AG04450 (cell line): ENCODE measurements at regions of chr7 and their contacts with region 1.

Region 1: DNA sequence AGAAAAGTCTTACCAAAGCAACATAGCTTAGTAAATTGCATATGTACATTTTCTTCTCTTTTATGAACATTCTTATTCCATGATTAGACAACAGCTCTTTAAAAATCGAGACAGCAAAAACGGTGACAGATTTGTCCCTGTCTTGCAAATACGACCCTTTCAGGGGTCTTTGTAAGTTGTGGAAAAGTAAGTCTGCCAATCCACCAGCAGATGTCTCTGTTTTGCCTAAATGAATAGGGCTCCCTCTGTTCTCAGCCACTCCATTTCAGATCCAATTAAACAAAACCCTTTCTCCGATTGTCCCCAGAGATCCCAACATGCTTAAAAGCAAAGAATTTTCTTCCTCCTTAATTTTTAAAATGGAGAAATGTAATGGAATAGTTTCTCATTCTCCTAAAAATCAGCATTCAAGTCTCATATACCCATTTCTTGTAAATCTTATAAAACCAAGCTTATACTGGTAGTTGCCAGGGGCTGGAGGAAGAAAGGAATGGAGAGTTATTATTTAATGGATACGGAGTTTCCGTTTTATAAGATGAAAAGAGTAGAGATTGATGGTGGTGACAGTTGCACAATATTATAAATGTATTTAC is 61.0 kb upstream of the NFE2L3 start:
- DNase-seq: peak; percentile 26
- H3K4me3 ChIP-seq: no peak overlapping the region
- H3K27ac ChIP-seq: no peak overlapping the region
- H3K27me3 ChIP-seq: peaks cover 5% of the 10 kb centered on the region
- CTCF ChIP-seq: peak; percentile 87

Region 2: DNA sequence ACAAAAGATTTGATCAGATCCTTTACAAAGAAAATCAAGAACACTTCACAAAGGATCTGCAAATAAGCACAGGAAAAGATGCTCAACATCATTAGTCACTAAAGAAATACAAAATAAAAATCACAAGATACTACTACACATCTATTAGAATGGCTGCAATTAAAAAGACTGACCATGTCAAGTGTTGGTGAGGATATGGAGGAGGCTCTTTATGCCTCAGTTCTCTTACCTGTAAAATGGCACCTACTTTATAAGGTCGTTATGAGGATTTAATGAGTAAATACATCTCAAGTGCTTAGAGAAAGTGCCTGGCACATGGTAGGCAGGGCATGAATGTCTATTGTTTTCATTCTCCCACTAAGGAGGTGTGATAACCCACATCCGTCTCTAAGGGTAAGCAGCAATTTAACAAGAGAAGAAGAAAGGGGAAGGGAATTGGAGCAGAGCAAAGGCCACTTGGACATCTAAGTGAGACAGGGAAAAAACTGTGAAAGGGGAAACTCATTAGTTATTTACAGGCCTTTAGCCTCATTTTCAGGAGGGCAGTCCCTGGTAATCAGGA is 96.5 kb before region 1 on chr7:
- CTCF ChIA-PET with region 1: no interaction called
- POLR2A ChIA-PET with region 1: no interaction called
- DNase-seq: no peak
- H3K4me3 ChIP-seq: no peak overlapping the region
- H3K27ac ChIP-seq: no peak overlapping the region
- H3K27me3 ChIP-seq: peaks cover 2% of the 10 kb centered on the region
- CTCF ChIP-seq: no peak

Region 3: DNA sequence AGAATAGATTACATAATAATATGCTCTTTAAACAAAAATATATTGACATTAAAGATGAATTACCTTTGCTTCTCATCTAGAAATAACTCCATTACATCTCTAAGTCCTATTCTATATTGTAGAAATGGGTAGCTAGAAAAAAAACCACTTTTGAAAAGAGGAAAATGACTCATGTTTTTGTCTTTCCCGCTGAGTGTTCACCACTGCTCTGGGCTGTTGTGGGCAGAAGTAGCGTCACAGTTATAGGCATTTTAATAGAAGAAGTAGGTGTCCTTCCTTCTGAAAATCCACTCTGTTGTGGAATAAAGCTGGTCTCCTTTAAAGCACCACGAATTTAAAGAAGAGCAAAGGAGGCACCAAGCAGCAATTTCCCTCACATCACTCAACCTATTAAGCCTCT is 56.6 kb before region 1 on chr7:
- CTCF ChIA-PET with region 1: no interaction called
- POLR2A ChIA-PET with region 1: no interaction called
- DNase-seq: no peak
- H3K4me3 ChIP-seq: no peak overlapping the region
- H3K27ac ChIP-seq: no peak overlapping the region
- H3K27me3 ChIP-seq: no peaks in the 10 kb centered on the region
- CTCF ChIP-seq: no peak

Region 4: DNA sequence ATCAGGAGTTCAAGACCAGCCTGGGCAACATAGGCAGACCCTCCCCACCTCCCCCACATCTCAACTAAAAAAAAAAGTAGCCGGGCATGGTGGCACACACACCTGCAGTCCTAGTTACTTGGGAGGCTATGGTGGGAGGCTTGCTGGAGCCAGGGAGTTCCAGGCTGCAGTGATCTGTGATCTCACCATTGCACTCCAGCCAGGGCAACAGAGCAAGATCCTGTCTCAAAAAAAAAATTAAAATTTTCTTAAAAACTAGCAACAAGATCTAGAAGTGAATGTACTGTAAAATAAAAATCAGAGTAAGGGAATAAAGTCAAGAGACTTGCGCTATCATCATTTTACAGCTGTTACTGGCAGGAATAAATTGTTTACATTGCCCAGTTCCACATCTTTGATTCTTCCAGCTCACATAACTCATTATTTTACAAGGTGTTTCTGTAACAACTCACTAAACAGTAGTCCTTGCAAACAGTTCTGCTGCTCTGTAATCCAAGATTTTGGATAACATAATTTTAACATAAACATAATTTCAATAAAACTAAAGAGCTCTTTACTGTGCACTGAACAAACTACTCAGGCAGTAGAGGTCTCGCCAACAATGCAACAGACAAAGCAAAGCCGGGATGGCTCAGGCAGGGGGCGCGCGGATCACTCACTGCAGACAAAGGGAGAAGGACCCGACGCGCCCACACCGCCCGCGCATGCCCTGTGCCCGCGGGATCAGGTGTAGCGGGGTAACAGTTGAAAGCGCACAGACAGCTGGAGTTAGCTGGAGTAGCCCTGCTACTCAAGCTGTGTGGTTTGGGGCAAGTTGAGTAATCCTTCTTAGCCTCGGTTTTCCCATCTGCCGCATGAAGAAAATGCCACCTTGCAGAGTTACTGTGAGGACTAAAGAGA is 12.3 kb before region 1 on chr7:
- CTCF ChIA-PET with region 1: interaction called, 18 read pairs
- POLR2A ChIA-PET with region 1: no interaction called
- DNase-seq: no peak
- H3K4me3 ChIP-seq: no peak overlapping the region
- H3K27ac ChIP-seq: no peak overlapping the region
- H3K27me3 ChIP-seq: peaks cover 25% of the 10 kb centered on the region
- CTCF ChIP-seq: peak; percentile 41

Region 5: DNA sequence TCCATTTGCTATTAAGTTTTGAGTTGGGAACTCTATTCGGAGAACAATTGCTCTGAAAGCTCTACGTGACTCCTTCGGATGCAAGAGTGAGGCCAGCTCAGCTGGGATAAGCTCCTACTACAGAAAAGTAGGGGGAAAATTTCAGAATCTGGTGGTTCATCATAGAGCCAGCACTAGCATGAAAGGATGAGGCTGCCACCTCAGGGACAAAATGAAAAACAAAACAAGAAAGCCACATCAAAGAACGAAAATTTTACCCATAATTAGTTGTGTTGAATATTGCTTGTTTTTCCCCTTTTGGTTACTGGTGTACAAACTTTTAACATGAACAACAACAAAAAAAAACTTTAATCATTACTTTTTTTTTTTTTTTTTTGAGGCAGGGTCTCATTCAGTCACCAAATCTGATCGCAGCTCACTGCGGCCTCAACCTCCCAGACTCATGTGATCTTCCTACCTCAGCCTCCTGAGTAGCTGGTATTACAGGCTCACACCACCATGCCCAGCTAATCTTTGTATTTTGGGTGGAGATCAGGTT is 21.2 kb after region 1 on chr7:
- CTCF ChIA-PET with region 1: interaction called, 13 read pairs
- POLR2A ChIA-PET with region 1: no interaction called
- DNase-seq: no peak
- H3K4me3 ChIP-seq: no peak overlapping the region
- H3K27ac ChIP-seq: no peak overlapping the region
- H3K27me3 ChIP-seq: peaks cover 7% of the 10 kb centered on the region
- CTCF ChIP-seq: no peak

Region 6: GRCh38 chr7:26187380-26188205 is 96.6 kb after region 1 on chr7:
- CTCF ChIA-PET with region 1: interaction called, 165 read pairs
- POLR2A ChIA-PET with region 1: no interaction called
- DNase-seq: no peak
- H3K4me3 ChIP-seq: no peak overlapping the region
- H3K27ac ChIP-seq: no peak overlapping the region
- H3K27me3 ChIP-seq: no peaks in the 10 kb centered on the region
- CTCF ChIP-seq: no peak

Region 7: GRCh38 chr7:26284995-26285632 is 194.1 kb after region 1 on chr7:
- CTCF ChIA-PET with region 1: interaction called, 11 read pairs
- POLR2A ChIA-PET with region 1: no interaction called
- DNase-seq: no peak
- H3K4me3 ChIP-seq: no peak overlapping the region
- H3K27ac ChIP-seq: no peak overlapping the region
- H3K27me3 ChIP-seq: peaks cover 4% of the 10 kb centered on the region
- CTCF ChIP-seq: 0 out of 2 replicates have a peak, but pooled peaks have one; percentile 7

Region 8: DNA sequence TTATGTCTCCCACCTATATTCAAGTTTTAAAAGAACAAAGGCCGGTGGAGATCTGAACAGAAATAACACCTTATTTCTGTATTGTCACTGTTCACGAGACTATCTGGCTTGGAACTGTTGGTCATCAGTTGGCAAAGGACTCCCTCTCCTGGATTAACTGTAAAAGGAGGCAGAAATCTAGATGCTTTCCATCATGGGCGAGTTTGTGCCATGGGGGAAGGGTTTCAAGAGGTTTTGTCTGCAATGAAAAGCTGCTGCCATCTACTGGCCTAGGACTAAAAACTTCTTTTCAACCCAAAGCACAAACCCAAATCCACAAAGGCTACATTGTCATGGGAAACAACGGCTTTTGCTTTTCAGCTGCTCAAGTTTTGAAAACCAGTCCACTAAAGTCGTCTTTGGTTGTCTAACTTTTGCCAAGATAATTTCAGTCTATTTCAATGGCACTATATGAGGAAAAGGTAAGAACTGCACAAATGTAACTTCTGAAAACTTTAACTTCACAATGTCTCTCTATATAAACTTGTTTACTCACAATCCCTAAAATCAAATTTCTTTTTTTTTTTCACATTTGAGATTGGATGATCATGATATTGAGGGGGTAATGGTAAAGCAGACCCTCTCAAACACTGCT is 576.6 kb after region 1 on chr7:
- CTCF ChIA-PET with region 1: interaction called, 15 read pairs
- POLR2A ChIA-PET with region 1: no interaction called
- DNase-seq: peak; percentile 56
- H3K4me3 ChIP-seq: no peak overlapping the region
- H3K27ac ChIP-seq: no peak overlapping the region
- H3K27me3 ChIP-seq: no peaks in the 10 kb centered on the region
- CTCF ChIP-seq: peak; percentile 92

Region 9: GRCh38 chr7:27723085-27723484 is 1632.1 kb after region 1 on chr7:
- CTCF ChIA-PET with region 1: no interaction called
- POLR2A ChIA-PET with region 1: no interaction called
- DNase-seq: no peak
- H3K4me3 ChIP-seq: no peak overlapping the region
- H3K27ac ChIP-seq: no peak overlapping the region
- H3K27me3 ChIP-seq: no peaks in the 10 kb centered on the region
- CTCF ChIP-seq: no peak